H1 (cell line): ENCODE measurements at regions of chr16 and their contacts with region 1.

Region 1: DNA sequence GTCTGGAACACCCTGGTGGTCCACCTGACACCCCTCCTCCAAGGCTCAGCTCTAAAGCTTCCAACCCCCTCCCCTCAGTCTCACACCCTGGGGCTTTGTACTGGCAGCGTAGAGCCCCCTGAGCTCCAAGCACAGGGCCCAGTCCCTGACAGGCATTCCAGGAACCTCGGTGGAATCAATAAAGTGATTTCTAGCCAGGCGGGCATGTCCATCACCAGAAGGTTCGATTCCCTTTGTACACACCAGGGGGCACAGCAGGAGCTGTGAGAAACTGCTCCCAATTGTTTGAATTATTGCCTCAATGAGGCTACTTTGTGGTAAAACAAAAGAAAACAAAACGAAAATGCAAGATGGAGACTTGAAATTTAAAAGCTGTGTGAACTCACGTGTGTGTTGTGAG is 51.8 kb downstream of the SMPD3 start:
- DNase-seq: no peak
- H3K4me3 ChIP-seq: no peak overlapping the region
- H3K27ac ChIP-seq: no peak overlapping the region
- H3K4me1 ChIP-seq: peaks cover 0 to 11% (median 2%) of the 10 kb centered on the region in 4 experiments; a peak in 5 of 7 replicates
- H3K27me3 ChIP-seq: no peaks in the 10 kb centered on the region
- CTCF ChIP-seq: peak in 2 of 3 experiments; percentile 2 to 13; a peak in 1 of 4 replicates
- EP300 ChIP-seq: no peak
- POLR2A ChIP-seq: no peak
- RAD21 ChIP-seq: no peak; a peak in 1 of 4 replicates

Region 2: DNA sequence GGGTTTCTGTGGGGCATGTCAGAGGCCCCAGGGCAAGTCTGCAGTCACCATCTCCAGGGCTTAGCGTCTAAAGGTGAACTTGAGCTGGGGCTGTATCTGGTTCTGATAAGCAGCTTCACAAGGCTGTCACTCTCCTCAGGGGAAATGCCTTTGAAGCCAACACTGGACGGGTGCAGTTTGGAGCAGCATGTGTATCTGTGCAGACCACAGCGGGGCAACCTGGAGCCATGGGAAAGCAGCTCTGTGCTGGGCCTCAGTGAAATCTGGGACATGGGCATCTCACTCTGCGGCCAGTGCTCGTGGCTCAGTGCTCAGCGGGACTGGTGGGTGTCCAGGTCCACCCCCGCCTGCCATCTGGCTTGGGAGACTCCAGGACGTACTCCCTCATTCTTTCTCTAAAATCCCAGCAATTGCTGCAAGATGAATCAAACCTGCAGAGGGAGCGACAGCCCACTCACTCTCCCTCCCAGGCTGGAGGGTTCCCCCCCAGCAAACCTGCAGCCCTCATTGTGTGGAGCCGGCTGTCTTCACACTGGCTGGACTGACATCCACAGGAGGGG is 22.2 kb before region 1 on chr16:
- CTCF ChIA-PET with region 1: interaction called, 55 read pairs
- POLR2A ChIA-PET with region 1: no interaction called
- DNase-seq: no peak
- H3K4me3 ChIP-seq: no peak overlapping the region
- H3K27ac ChIP-seq: no peak overlapping the region
- H3K4me1 ChIP-seq: peaks cover 0 to 2% (median under 1%) of the 10 kb centered on the region in 4 experiments; a peak in 3 of 7 replicates
- H3K27me3 ChIP-seq: peaks cover 0 to 2% (median 0%) of the 10 kb centered on the region in 4 experiments; a peak in 2 of 7 replicates
- CTCF ChIP-seq: no peak
- EP300 ChIP-seq: no peak
- POLR2A ChIP-seq: no peak
- RAD21 ChIP-seq: no peak

Region 3: GRCh38 chr16:68406451-68407152 is 10.1 kb after region 1 on chr16:
- CTCF ChIA-PET with region 1: interaction called, 41 read pairs
- POLR2A ChIA-PET with region 1: interaction called, 4 read pairs
- DNase-seq: no peak
- H3K4me3 ChIP-seq: no peak overlapping the region
- H3K27ac ChIP-seq: no peak overlapping the region
- H3K4me1 ChIP-seq: peaks cover 0 to 15% (median 6%) of the 10 kb centered on the region in 4 experiments; a peak in 6 of 7 replicates
- H3K27me3 ChIP-seq: no peaks in the 10 kb centered on the region; a peak in 1 of 7 replicates
- CTCF ChIP-seq: no peak
- EP300 ChIP-seq: no peak
- POLR2A ChIP-seq: no peak
- RAD21 ChIP-seq: no peak

Region 4: GRCh38 chr16:68417711-68418301 is 21.3 kb after region 1 on chr16:
- CTCF ChIA-PET with region 1: interaction called, 26 read pairs
- POLR2A ChIA-PET with region 1: no interaction called
- DNase-seq: no peak
- H3K4me3 ChIP-seq: no peak overlapping the region
- H3K27ac ChIP-seq: no peak overlapping the region
- H3K4me1 ChIP-seq: peaks cover 0 to 5% (median 1%) of the 10 kb centered on the region in 4 experiments; a peak in 2 of 7 replicates
- H3K27me3 ChIP-seq: no peaks in the 10 kb centered on the region; a peak in 1 of 7 replicates
- CTCF ChIP-seq: no peak
- EP300 ChIP-seq: no peak
- POLR2A ChIP-seq: no peak
- RAD21 ChIP-seq: no peak